ENCODE measurements at regions of chr12 and their contacts with region 1.

Region 1: DNA sequence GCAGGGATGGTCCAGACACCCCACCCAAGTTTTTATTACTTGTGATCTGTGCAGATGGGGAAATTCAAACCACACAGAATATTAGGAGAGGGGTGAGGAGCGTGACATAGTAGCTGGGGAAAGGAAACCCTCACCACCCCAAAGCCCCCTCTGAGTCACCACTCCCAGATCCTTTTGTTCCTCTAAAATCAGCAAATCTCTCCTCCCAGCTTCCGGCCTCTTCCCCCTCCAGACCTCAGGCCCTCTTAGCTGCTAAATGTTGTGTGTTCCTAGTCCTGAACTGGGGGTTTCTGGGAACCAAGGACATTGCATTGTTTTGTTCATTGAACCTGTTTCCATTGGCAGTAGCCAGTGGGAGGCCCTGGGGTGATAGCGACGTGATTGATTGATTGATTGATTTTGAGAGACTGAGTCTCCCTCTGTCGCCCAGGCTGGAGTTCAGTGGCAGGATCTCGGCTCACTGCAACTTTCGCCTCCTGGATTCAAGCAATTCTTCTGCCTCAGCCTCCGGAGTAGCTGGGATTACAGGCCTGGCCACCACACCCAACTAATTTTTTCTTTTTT is 5.9 kb upstream of the ORAI1 start:
- DNase-seq: no peak
- ATAC-seq: no peak
- H3K4me3 ChIP-seq: no peak overlapping the region
- H3K27ac ChIP-seq: no peak overlapping the region
- H3K4me1 ChIP-seq: peaks cover 3% of the 10 kb centered on the region
- H3K27me3 ChIP-seq: no peaks in the 10 kb centered on the region
- CTCF ChIP-seq: no peak
- EP300 ChIP-seq: no peak
- POLR2A ChIP-seq: no peak
- RAD21 ChIP-seq: no peak

Region 2: GRCh38 chr12:121494093-121494787 is 126.2 kb before region 1 on chr12:
- CTCF ChIA-PET with region 1: interaction called, 10 read pairs
- POLR2A ChIA-PET with region 1: interaction called, 7 read pairs
- RAD21 ChIA-PET with region 1: interaction called, 6 read pairs
- SMC1A ChIA-PET with region 1: interaction called, 5 read pairs
- in situ Hi-C with region 1: no loop called
- intact Hi-C with region 1: no loop called
- DNase-seq: no peak
- ATAC-seq: peak; percentile 82
- H3K4me3 ChIP-seq: no peak overlapping the region
- H3K27ac ChIP-seq: no peak overlapping the region
- H3K4me1 ChIP-seq: peaks cover 5% of the 10 kb centered on the region
- H3K27me3 ChIP-seq: no peaks in the 10 kb centered on the region
- CTCF ChIP-seq: peak; percentile 70 to 96 (median 95)
- EP300 ChIP-seq: no peak
- POLR2A ChIP-seq: no peak
- RAD21 ChIP-seq: peak; percentile 58

Region 3: DNA sequence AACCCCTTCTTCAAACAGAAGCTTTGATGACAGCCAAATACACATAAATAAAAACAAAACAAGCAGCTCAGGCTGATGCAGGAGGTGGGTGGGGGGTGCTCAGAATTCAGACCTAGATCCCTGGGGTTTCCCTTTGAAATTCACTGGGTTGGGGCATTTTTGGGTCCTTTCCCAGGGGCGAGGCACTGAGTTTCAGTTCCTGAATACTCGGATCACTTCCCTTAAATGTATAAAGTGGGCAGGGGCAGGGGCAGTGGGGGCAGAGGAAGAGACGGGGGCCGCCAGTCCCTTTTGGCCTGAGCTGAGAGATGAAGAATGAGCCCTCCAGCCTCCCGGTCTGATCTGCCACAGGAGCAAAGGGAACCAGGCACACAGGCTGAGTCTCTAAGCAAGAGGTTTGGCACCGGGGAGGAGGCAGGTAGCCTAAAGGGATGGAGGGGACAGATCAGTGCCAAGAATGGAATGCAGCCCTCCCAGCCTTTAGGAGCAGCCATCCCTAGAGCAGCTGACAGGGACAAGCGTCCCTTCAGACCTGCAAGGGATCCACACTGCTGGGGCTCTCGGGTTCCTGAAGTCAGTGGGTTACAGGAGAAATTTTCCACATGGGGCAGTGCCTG is 59.9 kb before region 1 on chr12:
- CTCF ChIA-PET with region 1: interaction called, 80 read pairs
- POLR2A ChIA-PET with region 1: interaction called, 12 read pairs
- RAD21 ChIA-PET with region 1: no interaction called
- SMC1A ChIA-PET with region 1: interaction called, 5 read pairs
- in situ Hi-C with region 1: no loop called
- intact Hi-C with region 1: no loop called
- DNase-seq: peak; percentile 63
- ATAC-seq: peak; percentile 89
- H3K4me3 ChIP-seq: no peak overlapping the region
- H3K27ac ChIP-seq: peak overlapping the region; percentile 65
- H3K4me1 ChIP-seq: peaks cover 31% of the 10 kb centered on the region
- H3K27me3 ChIP-seq: no peaks in the 10 kb centered on the region
- CTCF ChIP-seq: no peak
- EP300 ChIP-seq: peak; percentile 79 to 89; a peak in 3 of 4 replicates
- POLR2A ChIP-seq: no peak
- RAD21 ChIP-seq: no peak